ENCODE measurements at regions of chr11 and their contacts with region 1.

Region 1: DNA sequence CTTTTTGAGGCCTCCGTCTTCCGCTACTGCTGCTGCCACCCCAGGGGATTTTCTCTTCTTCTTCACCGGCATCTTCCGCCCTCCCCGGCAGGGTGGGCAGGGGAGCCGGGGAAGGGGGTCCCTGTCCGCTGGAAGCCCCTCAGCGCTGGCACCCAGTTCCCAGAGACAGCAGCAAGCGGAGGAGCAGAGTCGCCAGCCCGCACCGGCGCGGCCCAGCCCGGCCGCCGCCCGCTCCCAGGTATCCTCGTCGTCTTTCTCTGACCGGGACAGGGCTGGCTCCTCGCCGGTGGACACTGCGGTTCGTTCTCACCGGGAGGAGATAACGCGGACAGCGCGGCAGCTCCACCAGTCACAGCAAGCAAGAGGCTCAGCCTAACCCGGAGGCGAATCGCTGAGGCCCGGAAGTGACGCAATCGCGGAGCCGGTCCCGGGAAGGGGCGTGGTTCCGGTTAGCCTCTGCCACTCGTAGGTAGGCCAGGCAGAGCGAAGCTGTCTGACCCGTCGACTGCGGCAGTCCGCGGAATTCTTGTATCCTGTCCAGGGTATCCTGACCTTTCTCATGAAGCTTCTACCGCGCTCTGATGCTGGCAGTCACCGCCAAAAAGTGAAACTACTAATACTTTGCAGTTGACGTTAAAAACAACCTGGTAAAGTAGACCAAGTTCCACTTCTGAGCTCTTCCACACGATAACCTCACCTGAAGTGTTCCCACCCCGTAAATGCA is at the start of gene DCUN1D5:
- DNase-seq: peak; percentile 91
- ATAC-seq: peak; percentile 98
- H3K4me3 ChIP-seq: peak within 1 kb of the TSS; percentile 83 to 91 (median 87)
- H3K27ac ChIP-seq: peak within 1 kb of the TSS; percentile 84
- H3K4me1 ChIP-seq: peaks cover 31% of the 10 kb centered on the region
- H3K27me3 ChIP-seq: no peaks in the 10 kb centered on the region; a peak in 1 of 5 replicates
- CTCF ChIP-seq: 0 out of 2 replicates have a peak, but pooled peaks have one; percentile 8
- EP300 ChIP-seq: no peak
- POLR2A ChIP-seq: peak; percentile 84 to 90
- RAD21 ChIP-seq: 0 out of 2 replicates have a peak, but pooled peaks have one; percentile 11
- total RNA-seq, gene DCUN1D5: 46.7 and 57.0 TPM in 2 replicates

Region 2: DNA sequence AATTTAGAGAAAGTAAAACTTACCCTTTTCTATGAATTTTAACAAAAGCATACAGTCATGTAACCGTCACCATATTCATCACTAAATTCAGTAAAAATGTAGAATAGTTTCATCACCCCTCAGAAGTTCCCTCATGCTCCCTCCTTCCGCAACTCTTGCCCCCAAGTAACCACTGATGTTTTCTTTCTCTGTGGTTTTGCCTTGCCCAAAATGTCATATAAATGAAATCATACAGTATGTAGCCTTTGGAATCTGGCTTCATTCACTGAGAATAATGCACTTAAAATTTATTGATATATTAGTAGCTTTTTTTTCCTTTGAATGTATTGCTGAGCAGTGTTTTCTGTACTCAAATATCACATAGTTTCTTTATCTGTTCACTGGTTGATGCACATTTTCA is 60.1 kb before region 1 on chr11:
- CTCF ChIA-PET with region 1: no interaction called
- POLR2A ChIA-PET with region 1: no interaction called
- in situ Hi-C with region 1: no loop called
- intact Hi-C with region 1: no loop called
- DNase-seq: no peak
- ATAC-seq: no peak
- H3K4me3 ChIP-seq: no peak overlapping the region
- H3K27ac ChIP-seq: no peak overlapping the region
- H3K4me1 ChIP-seq: no peaks in the 10 kb centered on the region
- H3K27me3 ChIP-seq: no peaks in the 10 kb centered on the region
- CTCF ChIP-seq: no peak
- EP300 ChIP-seq: no peak
- POLR2A ChIP-seq: no peak
- RAD21 ChIP-seq: no peak

Region 3: DNA sequence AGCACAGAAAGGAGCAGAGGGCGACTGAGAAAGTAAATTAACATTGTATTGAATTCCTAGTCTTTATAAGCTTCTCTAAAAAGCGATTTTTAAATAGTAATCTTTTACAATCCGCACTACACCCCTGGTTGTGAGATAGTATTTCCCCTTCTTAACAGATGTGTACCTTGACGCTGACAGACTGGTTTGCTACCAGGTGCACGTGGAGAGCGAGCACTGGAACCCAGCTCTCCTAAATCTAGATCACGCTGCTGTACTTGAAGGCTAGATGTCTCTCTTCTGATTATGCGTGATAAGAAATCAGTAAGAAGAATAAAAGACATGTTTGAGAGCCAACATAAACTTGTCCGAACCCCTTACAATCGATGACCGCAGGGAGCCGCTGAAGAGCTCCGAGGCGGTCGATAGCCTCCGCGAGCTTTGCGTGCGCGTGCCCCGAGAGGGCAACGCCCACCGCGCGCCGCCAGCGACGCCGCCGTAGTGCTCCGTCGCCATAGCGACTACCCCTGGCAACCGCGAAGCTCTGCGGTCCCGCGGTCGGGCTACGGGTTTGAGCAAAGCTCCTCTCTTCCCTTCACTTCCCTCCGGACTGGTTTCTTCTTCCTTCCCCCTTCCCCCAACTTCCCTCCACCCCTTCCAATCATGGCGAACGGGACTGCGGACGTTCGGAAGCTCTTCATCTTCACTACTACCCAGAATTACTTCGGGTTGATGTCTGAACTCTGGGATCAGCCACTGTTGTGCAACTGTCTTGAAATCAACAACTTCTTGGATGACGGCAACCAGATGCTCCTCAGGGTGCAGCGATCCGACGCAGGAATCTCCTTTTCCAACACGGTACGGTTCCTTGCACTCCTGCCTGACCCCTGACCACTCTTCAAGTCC is 17.2 kb after region 1 on chr11 and contains the start of gene DYNC2H1:
- CTCF ChIA-PET with region 1: no interaction called
- POLR2A ChIA-PET with region 1: interaction called, 49 read pairs
- in situ Hi-C with region 1: no loop called
- intact Hi-C with region 1: loop called (anchors 1 kb)
- DNase-seq: peak; percentile 67
- ATAC-seq: peak; percentile 99
- H3K4me3 ChIP-seq: peak within 1 kb of the TSS; percentile 64 to 70 (median 67)
- H3K27ac ChIP-seq: no peak within 1 kb of the TSS
- H3K4me1 ChIP-seq: peaks cover 16% of the 10 kb centered on the region
- H3K27me3 ChIP-seq: no peaks in the 10 kb centered on the region; a peak in 2 of 5 replicates
- CTCF ChIP-seq: peak; percentile 72
- EP300 ChIP-seq: peak in 1 of 2 experiments; percentile 12; a peak in 1 of 4 replicates
- POLR2A ChIP-seq: no peak
- RAD21 ChIP-seq: no peak
- total RNA-seq, gene DYNC2H1: 0.66 and 1.2 TPM in 2 replicates

Region 4: GRCh38 chr11:103471546-103471945 is 379.6 kb after region 1 on chr11:
- CTCF ChIA-PET with region 1: no interaction called
- POLR2A ChIA-PET with region 1: no interaction called
- in situ Hi-C with region 1: no loop called
- intact Hi-C with region 1: no loop called
- DNase-seq: no peak
- ATAC-seq: no peak
- H3K4me3 ChIP-seq: no peak overlapping the region
- H3K27ac ChIP-seq: no peak overlapping the region
- H3K4me1 ChIP-seq: no peaks in the 10 kb centered on the region
- H3K27me3 ChIP-seq: no peaks in the 10 kb centered on the region
- CTCF ChIP-seq: no peak
- EP300 ChIP-seq: no peak
- POLR2A ChIP-seq: no peak
- RAD21 ChIP-seq: no peak

Measured in HepG2 (cell line).